ENCODE measurements at regions of chr1 and their contacts with region 1.

Region 1: GRCh38 chr1:165717918-165718515 is 19.7 kb upstream of the ALDH9A1 start:
- DNase-seq: peak; percentile 74
- H3K4me3 ChIP-seq: no peak overlapping the region
- H3K27ac ChIP-seq: no peak overlapping the region
- H3K4me1 ChIP-seq: no peaks in the 10 kb centered on the region
- H3K27me3 ChIP-seq: no peaks in the 10 kb centered on the region

Region 2: DNA sequence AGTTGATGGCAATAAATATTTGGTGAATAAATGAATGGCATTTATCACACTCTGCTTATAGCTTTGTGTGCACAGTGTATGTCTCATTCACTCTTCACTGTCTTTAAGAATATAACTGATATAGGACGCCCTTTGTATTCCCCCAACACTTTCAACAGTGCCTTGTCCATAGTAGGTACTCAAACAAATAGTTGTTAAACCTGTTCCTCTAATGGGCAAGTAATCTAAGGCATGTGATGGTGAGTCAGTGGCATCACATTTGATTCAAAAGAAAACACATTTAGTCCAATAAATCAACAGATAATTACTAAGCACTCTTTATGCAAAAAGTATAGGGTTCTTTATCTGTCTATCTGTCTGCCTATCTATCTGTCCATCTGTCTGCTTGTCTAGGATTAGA is 261.9 kb before region 1 on chr1:
- in situ Hi-C with region 1: no loop called
- DNase-seq: no peak
- H3K4me3 ChIP-seq: no peak overlapping the region
- H3K27ac ChIP-seq: no peak overlapping the region
- H3K4me1 ChIP-seq: no peaks in the 10 kb centered on the region
- H3K27me3 ChIP-seq: peaks cover 6% of the 10 kb centered on the region; the same call in 1 of the 2 replicates

Region 3: GRCh38 chr1:165914136-165914798 is 196.2 kb after region 1 on chr1:
- in situ Hi-C with region 1: loop called (anchors 10 kb)
- DNase-seq: peak; percentile 86
- H3K4me3 ChIP-seq: no peak overlapping the region
- H3K27ac ChIP-seq: peak overlapping the region; percentile 38; the same call in 1 of the 2 replicates
- H3K4me1 ChIP-seq: peaks cover 16% of the 10 kb centered on the region
- H3K27me3 ChIP-seq: no peaks in the 10 kb centered on the region

Region 4: DNA sequence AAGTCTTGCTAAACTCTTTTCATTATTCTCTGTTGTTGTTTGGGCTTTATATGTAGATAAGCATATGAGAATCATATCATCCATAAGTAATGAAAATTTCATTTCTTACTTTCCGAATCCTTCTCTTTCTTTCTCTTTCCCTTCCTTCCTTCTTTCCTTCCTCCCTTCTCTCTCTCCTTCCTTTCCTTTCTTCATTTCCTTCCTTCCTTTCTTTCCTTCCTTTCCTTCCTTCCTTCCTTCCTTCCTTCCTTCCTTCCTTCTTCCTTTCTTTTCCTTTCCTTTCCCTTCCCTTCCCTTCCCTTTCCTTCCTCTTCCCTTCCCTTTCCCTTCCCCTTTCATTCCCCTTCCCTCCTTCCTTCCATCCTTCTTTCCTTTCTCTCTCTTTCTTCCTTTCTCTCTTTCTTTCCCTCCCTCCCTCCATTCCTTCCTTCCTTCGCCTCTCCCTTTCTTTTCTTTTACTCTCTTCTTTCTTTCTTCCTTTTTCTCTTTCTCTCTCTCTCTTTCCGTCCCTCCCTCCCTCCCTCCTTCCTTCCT is 256.6 kb after region 1 on chr1:
- in situ Hi-C with region 1: no loop called
- DNase-seq: no peak
- H3K4me3 ChIP-seq: no peak overlapping the region
- H3K27ac ChIP-seq: no peak overlapping the region
- H3K4me1 ChIP-seq: no peaks in the 10 kb centered on the region
- H3K27me3 ChIP-seq: no peaks in the 10 kb centered on the region

Region 5: GRCh38 chr1:166166695-166167571 is 448.9 kb after region 1 on chr1 and contains the start of gene FAM78B:
- in situ Hi-C with region 1: loop called (anchors 25 kb)
- DNase-seq: peak; percentile 66
- H3K4me3 ChIP-seq: peak within 1 kb of the TSS; percentile 75
- H3K27ac ChIP-seq: no peak within 1 kb of the TSS
- H3K4me1 ChIP-seq: no peaks in the 10 kb centered on the region
- H3K27me3 ChIP-seq: peaks cover 32% of the 10 kb centered on the region
- total RNA-seq, gene FAM78B: 0.43 TPM in 1 of 2 replicates, not detected in the other

Region 6: DNA sequence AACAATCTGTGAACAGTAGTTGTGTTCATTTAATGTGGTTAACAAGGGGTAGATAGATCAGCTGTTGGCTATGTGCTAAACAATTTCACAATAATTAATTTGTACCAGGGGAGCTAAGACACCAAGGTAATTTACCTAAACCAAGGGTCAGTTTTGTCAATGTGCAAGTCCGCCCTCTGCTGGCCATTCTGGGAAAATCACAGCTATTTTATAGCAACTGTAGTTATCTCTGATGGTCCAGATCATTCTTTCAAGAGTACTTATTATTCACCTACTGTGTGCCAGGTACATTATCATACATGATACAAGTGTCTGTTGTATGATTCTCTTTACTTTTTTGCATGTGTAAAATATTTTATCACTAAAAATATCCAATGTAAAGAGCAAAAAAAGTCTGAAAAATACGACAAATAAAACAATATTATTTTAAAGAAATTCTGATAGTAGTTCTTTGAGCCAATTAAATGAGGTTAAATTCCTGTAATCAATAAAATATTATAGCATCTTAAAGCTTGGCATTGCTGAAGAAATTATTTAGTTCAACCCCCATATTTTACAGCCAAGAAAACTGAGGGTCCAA is 761.1 kb after region 1 on chr1:
- in situ Hi-C with region 1: loop called (anchors 25 kb)
- DNase-seq: peak; percentile 39
- H3K4me3 ChIP-seq: no peak overlapping the region
- H3K27ac ChIP-seq: no peak overlapping the region
- H3K4me1 ChIP-seq: no peaks in the 10 kb centered on the region
- H3K27me3 ChIP-seq: peaks cover 7% of the 10 kb centered on the region

Measured in GM23248 (cell line).